HEK293 (cell line): ENCODE measurements at regions of chr1 and their contacts with region 1.

Region 1: DNA sequence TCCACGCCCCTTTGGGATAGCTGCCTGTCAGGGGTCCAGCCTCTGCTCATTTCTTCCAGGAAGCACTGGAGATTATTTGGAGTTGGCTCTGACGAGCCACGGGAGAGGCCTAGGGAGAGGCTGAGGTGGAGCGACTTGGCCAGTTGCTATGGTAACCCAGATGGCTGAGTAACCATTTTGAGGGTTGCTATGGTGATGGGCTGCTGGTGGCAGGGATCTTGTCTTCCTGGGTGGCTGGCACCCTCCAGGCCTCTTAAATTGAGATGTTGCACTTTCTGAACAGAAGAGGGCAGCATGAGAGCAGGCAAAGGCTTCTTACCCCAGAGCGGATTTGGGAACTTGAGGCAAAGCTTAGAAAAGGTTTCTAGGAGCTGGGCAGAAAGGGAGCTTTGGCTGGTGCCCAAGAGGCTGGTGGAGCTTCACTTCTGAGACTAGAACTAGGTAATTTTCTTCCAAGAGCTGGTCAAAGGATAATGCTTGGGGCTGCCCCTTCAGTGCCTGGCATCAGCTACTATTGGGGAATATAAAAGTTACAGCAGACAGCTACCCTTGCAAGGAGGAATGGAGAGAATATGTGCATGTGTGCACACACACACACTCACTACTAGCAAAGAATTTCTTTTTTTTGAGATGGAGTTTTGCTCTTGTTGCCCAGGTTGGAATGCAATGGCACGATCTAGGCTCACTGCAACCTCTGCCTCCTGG is 72.5 kb downstream of the NDUFS5 start:
- H3K4me3 ChIP-seq: no peak overlapping the region
- H3K27ac ChIP-seq: no peak overlapping the region
- H3K4me1 ChIP-seq: peaks cover 10% of the 10 kb centered on the region
- CTCF ChIP-seq: peak; percentile 66; the same call in 1 of the 2 replicates

Region 2: GRCh38 chr1:39061951-39062350 is 36.7 kb before region 1 on chr1:
- CTCF ChIA-PET with region 1: no interaction called
- POLR2A ChIA-PET with region 1: no interaction called
- H3K4me3 ChIP-seq: no peak overlapping the region
- H3K27ac ChIP-seq: no peak overlapping the region
- H3K4me1 ChIP-seq: no peaks in the 10 kb centered on the region
- CTCF ChIP-seq: no peak

Region 3: DNA sequence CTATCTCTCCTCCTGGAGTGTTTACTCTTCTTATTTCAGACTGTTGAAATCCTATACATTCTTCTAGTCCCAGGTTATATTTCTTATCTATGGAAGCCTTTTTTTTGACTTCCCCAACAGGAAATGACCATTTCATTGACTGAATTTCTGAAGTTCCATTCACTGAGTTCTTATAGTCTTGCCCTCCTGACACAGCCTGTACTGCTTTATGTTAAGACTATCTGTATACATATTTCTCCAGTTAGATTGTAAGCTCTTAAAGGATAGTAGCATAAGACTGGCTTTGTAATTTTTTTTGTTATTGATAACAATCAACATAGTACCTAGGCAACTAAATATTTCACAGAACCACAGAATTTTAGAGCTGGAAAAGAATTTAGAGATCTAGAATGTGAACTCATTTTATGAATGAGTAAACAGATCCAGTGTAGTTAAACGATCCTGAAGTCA is 90.9 kb after region 1 on chr1:
- CTCF ChIA-PET with region 1: interaction called, 62 read pairs
- POLR2A ChIA-PET with region 1: no interaction called
- H3K4me3 ChIP-seq: no peak overlapping the region
- H3K27ac ChIP-seq: no peak overlapping the region
- H3K4me1 ChIP-seq: peaks cover 8% of the 10 kb centered on the region; the same call in 1 of the 2 replicates
- CTCF ChIP-seq: no peak

Region 4: GRCh38 chr1:39258146-39258924 is 159.6 kb after region 1 on chr1:
- CTCF ChIA-PET with region 1: interaction called, 67 read pairs
- POLR2A ChIA-PET with region 1: no interaction called
- H3K4me3 ChIP-seq: no peak overlapping the region
- H3K27ac ChIP-seq: no peak overlapping the region
- H3K4me1 ChIP-seq: peaks cover 11% of the 10 kb centered on the region; the same call in 1 of the 2 replicates
- CTCF ChIP-seq: peak; percentile 84

Region 5: GRCh38 chr1:39354572-39354971 is 255.9 kb after region 1 on chr1:
- CTCF ChIA-PET with region 1: interaction called, 10 read pairs
- POLR2A ChIA-PET with region 1: no interaction called
- H3K4me3 ChIP-seq: no peak overlapping the region
- H3K27ac ChIP-seq: no peak overlapping the region
- H3K4me1 ChIP-seq: no peaks in the 10 kb centered on the region
- CTCF ChIP-seq: no peak

Region 6: GRCh38 chr1:39391691-39392679 is 293.3 kb after region 1 on chr1:
- CTCF ChIA-PET with region 1: interaction called, 17 read pairs
- POLR2A ChIA-PET with region 1: no interaction called
- H3K4me3 ChIP-seq: no peak overlapping the region
- H3K27ac ChIP-seq: no peak overlapping the region
- H3K4me1 ChIP-seq: peaks cover 6% of the 10 kb centered on the region; the same call in 1 of the 2 replicates
- CTCF ChIP-seq: no peak

Region 7: GRCh38 chr1:39538588-39539465 is 440.1 kb after region 1 on chr1:
- CTCF ChIA-PET with region 1: interaction called, 51 read pairs
- POLR2A ChIA-PET with region 1: no interaction called
- H3K4me3 ChIP-seq: no peak overlapping the region
- H3K27ac ChIP-seq: no peak overlapping the region
- H3K4me1 ChIP-seq: no peaks in the 10 kb centered on the region
- CTCF ChIP-seq: peak; percentile 80; the same call in 1 of the 2 replicates